Uterus (tissue), 4 donors: ENCODE measurements at regions of chr10 and their contacts with region 1.

Region 1: GRCh38 chr10:71569775-71570588 is 149.6 kb downstream of the C10orf105 start:
- DNase-seq: peak; percentile 74 to 77
- H3K4me3 ChIP-seq: no peak overlapping the region
- H3K27ac ChIP-seq: no peak overlapping the region
- H3K4me1 ChIP-seq: no peaks in the 10 kb centered on the region
- H3K27me3 ChIP-seq: no peaks in the 10 kb centered on the region
- CTCF ChIP-seq: peak; percentile 78 to 89 (median 84)
- POLR2A ChIP-seq: no peak

Region 2: GRCh38 chr10:71319042-71319799 is 250.8 kb before region 1 on chr10 and contains the start of gene SLC29A3:
- intact Hi-C with region 1: loop called (anchors 5 kb)
- DNase-seq: peak; percentile 80 to 83
- H3K4me3 ChIP-seq: peak within 1 kb of the TSS; percentile 74 to 80
- H3K27ac ChIP-seq: peak within 1 kb of the TSS; percentile 88 to 92
- H3K4me1 ChIP-seq: no peaks in the 10 kb centered on the region
- H3K27me3 ChIP-seq: no peaks in the 10 kb centered on the region
- CTCF ChIP-seq: peak; percentile 64 to 72 (median 70)
- POLR2A ChIP-seq: peak; percentile 63 to 85
- total RNA-seq, gene SLC29A3: 1.0 to 13.8 (median 5.5) TPM

Region 3: DNA sequence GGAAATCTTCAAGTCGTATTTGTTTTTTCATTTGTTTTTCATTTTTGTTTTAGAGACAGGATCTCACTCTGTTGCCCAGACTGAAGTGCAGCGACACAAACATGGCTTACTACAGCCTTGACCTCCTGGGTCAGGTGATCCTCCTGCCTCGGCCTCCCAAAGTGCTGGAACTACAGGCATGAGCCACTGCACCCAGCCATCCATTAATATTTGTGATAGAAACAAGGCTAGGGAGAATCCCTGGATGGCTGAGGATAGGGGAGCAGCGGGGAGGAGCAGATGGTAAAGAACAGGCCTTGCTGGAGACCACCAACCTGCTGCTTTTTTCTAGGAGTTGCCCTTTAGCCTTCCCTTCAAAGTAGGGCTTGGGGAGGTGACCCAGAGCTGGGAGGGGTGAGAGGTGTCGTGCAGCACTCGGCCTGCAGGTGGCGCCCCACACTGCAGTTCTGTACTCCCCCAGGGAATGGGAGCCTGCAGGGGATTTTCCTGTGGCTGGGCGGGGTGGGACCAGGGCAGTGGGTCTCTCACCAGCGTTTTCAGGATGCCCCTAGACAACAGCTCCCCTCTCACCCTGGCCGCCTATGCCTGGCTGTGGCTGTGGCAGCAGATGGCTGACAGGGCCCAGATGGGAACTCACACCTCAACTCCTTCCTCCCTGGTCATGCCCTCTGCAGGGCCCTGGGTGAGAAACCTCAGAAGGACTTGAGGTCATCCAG is 185.9 kb before region 1 on chr10:
- intact Hi-C with region 1: loop called (anchors 10 kb)
- DNase-seq: peak; percentile 66 to 71
- H3K4me3 ChIP-seq: no peak overlapping the region
- H3K27ac ChIP-seq: no peak overlapping the region
- H3K4me1 ChIP-seq: no peaks in the 10 kb centered on the region
- H3K27me3 ChIP-seq: no peaks in the 10 kb centered on the region
- CTCF ChIP-seq: peak; percentile 78 to 91 (median 89)
- POLR2A ChIP-seq: no peak

Region 4: DNA sequence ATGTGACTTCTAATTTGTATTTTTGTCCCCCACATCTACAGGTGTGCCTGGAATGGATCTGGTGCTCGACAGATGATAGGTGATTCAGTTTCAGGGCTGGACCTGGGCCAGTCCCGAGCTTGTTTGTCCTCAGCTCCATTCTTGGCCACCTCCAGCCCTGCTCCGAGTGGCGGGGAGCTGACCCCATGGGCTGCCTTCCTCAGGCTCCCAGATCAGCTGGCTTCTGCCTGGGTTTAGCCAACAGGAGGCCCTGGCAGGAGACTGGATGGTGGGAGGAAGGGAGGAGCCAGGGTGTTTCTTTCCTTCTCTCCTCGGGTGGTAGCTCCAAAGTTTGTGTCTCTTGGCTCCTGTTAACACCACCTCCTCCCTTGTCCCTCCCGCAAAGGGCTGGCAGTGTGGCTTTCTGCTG is 98.0 kb before region 1 on chr10:
- intact Hi-C with region 1: no loop called
- DNase-seq: peak in 1 of 2 donors; percentile 22
- H3K4me3 ChIP-seq: no peak overlapping the region
- H3K27ac ChIP-seq: no peak overlapping the region
- H3K4me1 ChIP-seq: peaks cover 8 to 10% of the 10 kb centered on the region in 2 donors
- H3K27me3 ChIP-seq: no peaks in the 10 kb centered on the region
- CTCF ChIP-seq: no peak
- POLR2A ChIP-seq: no peak

Region 5: GRCh38 chr10:71812016-71812912 is 242.3 kb after region 1 on chr10:
- intact Hi-C with region 1: loop called (anchors 10 kb)
- DNase-seq: peak; percentile 53 to 66
- H3K4me3 ChIP-seq: no peak overlapping the region
- H3K27ac ChIP-seq: no peak overlapping the region
- H3K4me1 ChIP-seq: no peaks in the 10 kb centered on the region
- H3K27me3 ChIP-seq: no peaks in the 10 kb centered on the region
- CTCF ChIP-seq: peak; percentile 68 to 84 (median 82)
- POLR2A ChIP-seq: no peak